CD8-positive, alpha-beta T cell (primary cell): ENCODE measurements at regions of chr9 and their contacts with region 1.

Region 1: GRCh38 chr9:96418074-96418809 is at the start of gene ZNF367:
- DNase-seq: peak; percentile 80 to 95 (median 90)
- ATAC-seq: peak; percentile 71
- H3K4me3 ChIP-seq: peak within 1 kb of the TSS; percentile 93 to 96
- H3K4me3 Mint-ChIP-seq: peak within 1 kb of the TSS; percentile 90
- H3K27ac ChIP-seq: peak within 1 kb of the TSS; percentile 88 to 91
- H3K27ac Mint-ChIP-seq: peak within 1 kb of the TSS; percentile 94
- H3K4me1 ChIP-seq: peaks cover 36% of the 10 kb centered on the region
- H3K4me1 Mint-ChIP-seq: peaks cover 33% of the 10 kb centered on the region
- H3K27me3 ChIP-seq: no peaks in the 10 kb centered on the region
- H3K27me3 Mint-ChIP-seq: no peaks in the 10 kb centered on the region
- CTCF ChIP-seq: no peak
- total RNA-seq, gene ZNF367: 6.1 to 6.4 TPM

Region 2: DNA sequence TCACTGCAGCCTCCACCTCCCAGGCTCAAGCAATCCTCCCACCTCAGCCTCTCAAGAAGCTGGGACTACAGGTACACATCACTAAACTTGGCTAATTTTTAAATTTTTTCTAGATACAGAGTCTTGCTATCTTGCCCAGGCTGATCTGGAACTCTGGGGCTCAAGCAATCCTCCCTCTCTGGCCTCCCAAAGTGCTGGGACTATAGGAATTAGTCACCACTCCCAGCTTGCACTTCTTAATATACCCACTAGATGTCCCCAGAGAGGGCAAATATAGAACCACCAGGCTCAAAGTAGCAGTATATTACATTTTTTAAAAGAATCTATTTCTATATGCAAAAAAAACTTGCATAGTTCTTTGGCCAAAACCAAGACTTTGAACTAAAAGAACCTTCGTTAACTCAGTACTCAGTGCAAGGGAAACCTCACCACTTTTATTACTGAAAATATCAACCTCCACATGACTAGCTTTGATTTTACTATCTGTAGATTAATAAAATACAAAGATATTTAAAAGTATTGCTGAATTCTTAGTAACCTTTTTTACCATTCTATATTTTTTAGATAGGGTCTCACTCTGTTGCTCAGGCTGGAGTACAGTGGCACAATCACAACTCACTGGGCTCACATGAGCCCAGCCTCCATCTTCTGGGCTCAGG is 90.4 kb before region 1 on chr9:
- CTCF ChIA-PET with region 1: interaction called, 7 read pairs
- POLR2A ChIA-PET with region 1: interaction called, 3 read pairs
- intact Hi-C with region 1: loop called (anchors 1 to 5 kb)
- DNase-seq: peak in 7 of 9 experiments; percentile 16 to 72 (median 52)
- ATAC-seq: peak; percentile 87
- H3K4me3 ChIP-seq: no peak overlapping the region
- H3K4me3 Mint-ChIP-seq: no peak overlapping the region
- H3K27ac ChIP-seq: no peak overlapping the region
- H3K27ac Mint-ChIP-seq: no peak overlapping the region
- H3K4me1 ChIP-seq: no peaks in the 10 kb centered on the region
- H3K4me1 Mint-ChIP-seq: no peaks in the 10 kb centered on the region
- H3K27me3 ChIP-seq: no peaks in the 10 kb centered on the region
- H3K27me3 Mint-ChIP-seq: no peaks in the 10 kb centered on the region
- CTCF ChIP-seq: peak; percentile 91

Region 3: GRCh38 chr9:96398582-96399324 is 19.5 kb before region 1 on chr9:
- CTCF ChIA-PET with region 1: interaction called, 14 read pairs
- POLR2A ChIA-PET with region 1: interaction called, 15 read pairs
- intact Hi-C with region 1: loop called in 1 of 2 experiments (anchors 2 kb)
- DNase-seq: peak in 8 of 9 experiments; percentile 8 to 68 (median 42)
- ATAC-seq: peak; percentile 82
- H3K4me3 ChIP-seq: no peak overlapping the region
- H3K4me3 Mint-ChIP-seq: peak overlapping the region; percentile 61
- H3K27ac ChIP-seq: peak overlapping the region; percentile 36 to 63
- H3K27ac Mint-ChIP-seq: peak overlapping the region; percentile 91
- H3K4me1 ChIP-seq: peaks cover 22% of the 10 kb centered on the region
- H3K4me1 Mint-ChIP-seq: peaks cover 36% of the 10 kb centered on the region
- H3K27me3 ChIP-seq: no peaks in the 10 kb centered on the region
- H3K27me3 Mint-ChIP-seq: no peaks in the 10 kb centered on the region
- CTCF ChIP-seq: no peak

Region 4: DNA sequence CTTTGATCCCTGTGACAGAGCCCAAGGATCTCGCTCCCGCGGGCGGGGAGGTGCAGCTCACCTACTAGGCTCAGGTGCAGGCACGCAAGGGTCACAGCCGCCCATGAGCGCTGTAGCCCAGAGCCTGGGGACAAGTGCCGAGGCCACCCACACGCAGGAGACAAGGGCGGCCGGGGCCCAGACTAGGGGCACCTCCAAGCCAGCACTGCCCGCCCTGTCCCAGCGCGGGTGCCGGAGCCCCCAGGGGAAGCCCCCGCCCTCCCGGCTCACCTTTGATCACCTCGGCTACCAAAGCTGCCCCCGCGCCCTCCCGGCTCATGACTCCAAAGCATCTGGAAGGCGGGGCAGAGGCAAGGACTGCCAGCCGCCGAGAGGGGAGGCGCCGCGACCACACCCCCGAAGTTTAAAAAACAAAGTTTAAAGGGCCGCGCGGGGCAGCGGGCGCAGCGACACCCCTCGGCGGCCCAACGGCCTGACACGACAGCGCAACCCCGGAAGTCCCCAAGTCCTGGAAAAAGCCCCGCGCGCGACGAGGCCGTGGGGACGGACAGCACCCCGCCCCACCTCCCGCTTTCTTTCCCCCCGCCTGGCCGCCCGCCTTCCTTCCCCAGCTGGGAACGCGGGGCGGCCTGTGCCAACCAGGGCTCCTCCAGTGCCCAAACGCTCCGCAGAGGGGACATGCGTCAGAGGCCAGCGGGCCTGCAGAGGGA is 148.4 kb after region 1 on chr9:
- CTCF ChIA-PET with region 1: no interaction called
- POLR2A ChIA-PET with region 1: interaction called, 3 read pairs
- intact Hi-C with region 1: loop called (anchors 1 to 5 kb)
- DNase-seq: peak; percentile 57 to 92 (median 82)
- ATAC-seq: peak; percentile 86
- H3K4me3 ChIP-seq: peak overlapping the region; percentile 76 to 88
- H3K4me3 Mint-ChIP-seq: peak overlapping the region; percentile 86
- H3K27ac ChIP-seq: peak overlapping the region; percentile 87 to 91
- H3K27ac Mint-ChIP-seq: peak overlapping the region; percentile 84
- H3K4me1 ChIP-seq: peaks cover 24% of the 10 kb centered on the region
- H3K4me1 Mint-ChIP-seq: peaks cover 27% of the 10 kb centered on the region
- H3K27me3 ChIP-seq: no peaks in the 10 kb centered on the region
- H3K27me3 Mint-ChIP-seq: peaks cover 12% of the 10 kb centered on the region
- CTCF ChIP-seq: peak; percentile 58

Region 5: GRCh38 chr9:96777426-96777864 is 359.2 kb after region 1 on chr9:
- CTCF ChIA-PET with region 1: no interaction called
- POLR2A ChIA-PET with region 1: no interaction called
- intact Hi-C with region 1: loop called (anchors 1 kb)
- DNase-seq: no peak
- ATAC-seq: no peak
- H3K4me3 ChIP-seq: peak overlapping the region; percentile 54 to 70
- H3K4me3 Mint-ChIP-seq: peak overlapping the region; percentile 97
- H3K27ac ChIP-seq: peak overlapping the region; percentile 76 to 77
- H3K27ac Mint-ChIP-seq: peak overlapping the region; percentile 99
- H3K4me1 ChIP-seq: peaks cover 14% of the 10 kb centered on the region
- H3K4me1 Mint-ChIP-seq: peaks cover 52% of the 10 kb centered on the region
- H3K27me3 ChIP-seq: no peaks in the 10 kb centered on the region
- H3K27me3 Mint-ChIP-seq: no peaks in the 10 kb centered on the region
- CTCF ChIP-seq: no peak

Region 6: DNA sequence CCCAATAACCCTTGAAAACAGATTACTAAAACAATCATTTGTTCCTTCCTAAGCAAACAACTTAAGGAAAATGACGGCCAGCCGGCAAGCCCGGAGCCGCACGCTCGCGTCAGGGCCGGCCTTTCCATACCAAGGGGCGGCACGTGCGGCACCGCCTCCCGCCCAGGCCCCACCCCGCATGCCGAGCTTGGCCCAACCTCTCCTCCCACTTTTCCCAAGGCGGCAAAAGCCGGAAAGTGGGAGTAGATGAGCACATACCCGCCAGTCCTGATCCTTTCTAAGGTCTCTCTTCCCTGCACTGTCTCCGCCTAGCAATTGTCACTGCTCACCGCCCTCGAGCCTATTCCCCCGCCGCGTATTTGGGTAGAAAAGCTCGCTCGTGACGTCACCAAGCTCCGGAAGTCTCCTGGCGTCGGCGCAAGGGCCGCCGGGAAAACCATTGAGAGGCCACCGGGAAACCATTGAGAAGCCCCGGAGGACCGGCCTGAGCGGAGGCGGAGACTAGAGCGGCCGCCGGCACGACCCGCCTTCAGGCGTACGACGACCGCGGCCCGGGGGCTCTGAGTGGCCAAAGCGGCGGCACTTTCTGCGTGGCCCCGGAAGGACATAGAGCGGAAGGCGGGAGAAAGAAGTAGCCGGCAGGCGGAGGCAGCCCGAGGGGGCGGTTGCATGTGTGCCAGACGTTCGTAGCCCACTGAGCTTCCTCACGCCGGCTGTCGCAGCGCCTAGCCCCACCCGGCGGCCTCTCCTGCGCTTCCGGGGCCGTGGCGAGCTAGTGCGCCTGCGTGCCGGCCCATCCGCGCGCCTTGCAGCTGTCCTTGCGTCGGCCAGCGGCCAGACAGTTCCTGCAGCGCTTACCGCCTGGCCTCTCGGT is 1215.0 kb after region 1 on chr9 and contains the starts of genes NCBP1 and TSTD2:
- CTCF ChIA-PET with region 1: no interaction called
- POLR2A ChIA-PET with region 1: no interaction called
- intact Hi-C with region 1: loop called in 1 of 2 experiments (anchors 5 kb)
- DNase-seq: peak; percentile 89 to 98 (median 95)
- ATAC-seq: peak; percentile 86
- H3K4me3 ChIP-seq: peak within 1 kb of the TSS; percentile 96 to 97
- H3K4me3 Mint-ChIP-seq: peak within 1 kb of the TSS; percentile 96
- H3K27ac ChIP-seq: peak within 1 kb of the TSS; percentile 88 to 97
- H3K27ac Mint-ChIP-seq: peak within 1 kb of the TSS; percentile 99
- H3K4me1 ChIP-seq: peaks cover 45% of the 10 kb centered on the region
- H3K4me1 Mint-ChIP-seq: peaks cover 57% of the 10 kb centered on the region
- H3K27me3 ChIP-seq: no peaks in the 10 kb centered on the region
- H3K27me3 Mint-ChIP-seq: no peaks in the 10 kb centered on the region
- CTCF ChIP-seq: no peak
- total RNA-seq, gene NCBP1: 50.7 to 58.5 TPM
- total RNA-seq, gene TSTD2: 34.3 to 40.8 TPM